Activated CD4-positive, alpha-beta T cell treated with anti-CD3 and anti-CD28 coated beads, Interleukin-2, amount 10 ng/mL, durations not matched to agents 24 days and 14 days (primary cell): ENCODE measurements at regions of chrX and their contacts with region 1.

Region 1: DNA sequence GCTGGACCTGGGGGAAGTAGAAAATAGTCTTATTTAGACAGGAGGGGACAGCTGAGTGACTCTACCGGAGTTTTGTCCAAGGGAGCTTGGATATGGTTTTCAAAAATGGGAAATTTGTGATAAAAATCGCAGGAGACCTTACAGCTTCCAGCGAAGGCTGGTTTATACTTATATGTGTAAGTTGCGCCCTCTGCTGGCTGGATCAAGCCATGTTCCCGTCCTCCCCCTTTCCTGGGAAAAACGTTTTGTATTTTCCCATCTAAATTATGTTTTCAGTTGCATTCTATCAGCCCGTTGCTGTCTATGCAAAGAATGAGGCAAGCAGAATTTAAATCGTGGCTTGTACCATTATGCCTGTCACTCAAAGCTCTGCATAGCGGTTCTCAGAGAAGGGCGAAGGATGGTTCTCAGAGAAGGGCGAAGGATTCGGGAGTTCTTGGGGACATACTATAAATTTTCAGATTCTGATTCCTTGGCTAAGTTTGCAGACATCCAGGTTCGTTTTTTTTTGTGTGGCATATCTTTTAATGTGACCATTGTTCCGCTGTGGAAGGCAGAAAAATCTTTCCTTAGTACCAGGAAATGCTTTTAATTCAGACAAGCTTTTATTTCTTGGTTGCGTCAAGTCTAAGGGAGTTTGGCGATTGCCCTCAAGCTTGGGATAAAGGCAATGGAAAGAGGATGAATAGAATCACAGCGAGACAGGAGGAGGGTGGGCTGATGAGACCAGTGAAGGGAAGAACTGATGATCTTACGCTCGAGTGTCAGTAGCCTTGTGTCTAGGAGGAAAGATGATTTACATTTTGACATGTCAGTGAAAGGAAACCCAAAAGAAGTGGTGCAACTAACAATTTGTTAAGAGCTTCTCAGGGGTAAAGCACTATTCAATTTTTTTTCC is 128.5 kb upstream of the ARX start:
- DNase-seq: peak; percentile 72
- H3K4me3 Mint-ChIP-seq: no peak overlapping the region
- H3K27ac Mint-ChIP-seq: no peak overlapping the region
- H3K4me1 Mint-ChIP-seq: peaks cover 2% of the 10 kb centered on the region
- H3K27me3 Mint-ChIP-seq: peaks cover 28% of the 10 kb centered on the region

Region 2: GRCh38 chrX:24759786-24760185 is 384.5 kb before region 1 on chrX:
- intact Hi-C with region 1: loop called (anchors 5 kb)
- DNase-seq: no peak
- H3K4me3 Mint-ChIP-seq: no peak overlapping the region
- H3K27ac Mint-ChIP-seq: no peak overlapping the region
- H3K4me1 Mint-ChIP-seq: peaks cover 2% of the 10 kb centered on the region
- H3K27me3 Mint-ChIP-seq: no peaks in the 10 kb centered on the region

Region 3: DNA sequence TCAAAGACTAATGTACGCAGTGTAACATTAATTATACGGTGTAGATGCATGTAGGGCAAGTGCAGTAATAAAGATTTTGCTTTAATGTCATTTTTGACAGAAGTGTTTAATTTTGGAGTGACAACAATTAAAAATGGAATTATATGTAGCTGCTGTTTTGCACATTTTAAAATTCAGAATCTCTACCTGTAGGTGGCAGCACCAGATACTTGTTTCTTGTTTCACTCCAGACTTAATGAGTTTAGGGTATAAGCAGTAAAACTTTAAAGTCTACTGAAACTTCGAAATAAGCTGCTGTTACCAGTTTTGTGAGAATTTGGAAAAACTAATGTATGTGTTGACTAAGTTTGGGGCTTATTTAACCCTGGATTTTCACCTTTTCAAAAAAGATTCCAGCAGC is 305.7 kb before region 1 on chrX:
- intact Hi-C with region 1: loop called (anchors 2 kb)
- DNase-seq: peak; percentile 65
- H3K4me3 Mint-ChIP-seq: no peak overlapping the region
- H3K27ac Mint-ChIP-seq: no peak overlapping the region
- H3K4me1 Mint-ChIP-seq: no peaks in the 10 kb centered on the region
- H3K27me3 Mint-ChIP-seq: no peaks in the 10 kb centered on the region

Region 4: GRCh38 chrX:25125483-25125882 is 18.8 kb before region 1 on chrX:
- intact Hi-C with region 1: no loop called
- DNase-seq: no peak
- H3K4me3 Mint-ChIP-seq: no peak overlapping the region
- H3K27ac Mint-ChIP-seq: no peak overlapping the region
- H3K4me1 Mint-ChIP-seq: no peaks in the 10 kb centered on the region
- H3K27me3 Mint-ChIP-seq: peaks cover 6% of the 10 kb centered on the region

Region 5: GRCh38 chrX:25206778-25207177 is 62.5 kb after region 1 on chrX:
- intact Hi-C with region 1: no loop called
- DNase-seq: no peak
- H3K4me3 Mint-ChIP-seq: no peak overlapping the region
- H3K27ac Mint-ChIP-seq: no peak overlapping the region
- H3K4me1 Mint-ChIP-seq: no peaks in the 10 kb centered on the region
- H3K27me3 Mint-ChIP-seq: no peaks in the 10 kb centered on the region